Activated T-helper 2 cell treated with anti-CD3 and anti-CD28 coated beads, Interferon-gamma antibody, Interleukin-2, Interleukin-4, amounts not matched to agents 10 μg/mL and 5 μg/mL and 100 μg/mL, durations not matched to agents 14 hours and 24 hours and 36 hours (primary cell): ENCODE measurements at regions of chr20 and their contacts with region 1.

Region 1: DNA sequence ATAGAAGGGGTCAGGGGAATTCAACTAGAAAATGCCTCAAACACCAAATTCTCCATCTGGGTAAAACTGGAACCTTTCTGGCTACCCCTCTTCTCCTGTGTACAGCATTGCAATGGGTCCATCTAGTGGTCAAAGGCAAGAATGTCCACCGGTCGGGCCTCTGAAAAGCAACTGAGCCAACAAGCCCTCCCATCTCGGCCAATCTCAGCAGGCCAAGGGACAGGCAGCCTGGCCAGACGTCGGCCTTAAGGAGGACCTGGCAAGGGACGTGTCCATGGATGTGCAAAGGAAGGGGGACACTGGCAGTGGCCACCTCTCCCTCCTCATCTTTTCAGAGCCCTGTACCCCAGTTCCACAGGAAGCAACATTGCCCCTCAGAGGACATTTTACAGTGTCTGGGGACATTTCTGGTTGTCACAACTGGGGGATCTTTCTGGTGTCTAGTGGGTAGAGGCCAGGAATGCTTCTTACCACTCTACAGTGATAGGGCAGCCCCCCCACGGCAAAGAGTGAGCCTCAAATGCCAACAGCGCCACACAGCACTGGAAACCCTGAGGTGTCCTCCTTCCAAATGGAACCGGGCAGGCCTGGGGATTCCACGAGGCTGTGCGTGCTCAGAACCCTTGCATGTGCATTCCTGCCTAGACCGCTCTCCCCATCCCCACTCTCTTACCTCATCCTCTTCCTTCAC is 99.8 kb upstream of the FOXA2 start:
- DNase-seq: no peak
- H3K4me3 Mint-ChIP-seq: no peak overlapping the region
- H3K27ac Mint-ChIP-seq: no peak overlapping the region
- H3K4me1 Mint-ChIP-seq: no peaks in the 10 kb centered on the region
- H3K27me3 Mint-ChIP-seq: no peaks in the 10 kb centered on the region

Region 2: GRCh38 chr20:22333885-22334545 is 350.2 kb before region 1 on chr20:
- intact Hi-C with region 1: loop called (anchors 1 kb)
- DNase-seq: peak; percentile 14
- H3K4me3 Mint-ChIP-seq: no peak overlapping the region
- H3K27ac Mint-ChIP-seq: no peak overlapping the region
- H3K4me1 Mint-ChIP-seq: no peaks in the 10 kb centered on the region
- H3K27me3 Mint-ChIP-seq: no peaks in the 10 kb centered on the region

Region 3: GRCh38 chr20:22339091-22339881 is 344.9 kb before region 1 on chr20:
- intact Hi-C with region 1: loop called (anchors 1 kb)
- DNase-seq: no peak
- H3K4me3 Mint-ChIP-seq: no peak overlapping the region
- H3K27ac Mint-ChIP-seq: no peak overlapping the region
- H3K4me1 Mint-ChIP-seq: peaks cover 2% of the 10 kb centered on the region
- H3K27me3 Mint-ChIP-seq: peaks cover 1% of the 10 kb centered on the region

Region 4: GRCh38 chr20:22716821-22717351 is 32.7 kb after region 1 on chr20:
- intact Hi-C with region 1: no loop called
- DNase-seq: no peak
- H3K4me3 Mint-ChIP-seq: no peak overlapping the region
- H3K27ac Mint-ChIP-seq: no peak overlapping the region
- H3K4me1 Mint-ChIP-seq: no peaks in the 10 kb centered on the region
- H3K27me3 Mint-ChIP-seq: no peaks in the 10 kb centered on the region

Region 5: GRCh38 chr20:22949331-22950109 is 265.3 kb after region 1 on chr20:
- intact Hi-C with region 1: no loop called
- DNase-seq: no peak
- H3K4me3 Mint-ChIP-seq: no peak overlapping the region
- H3K27ac Mint-ChIP-seq: no peak overlapping the region
- H3K4me1 Mint-ChIP-seq: no peaks in the 10 kb centered on the region
- H3K27me3 Mint-ChIP-seq: no peaks in the 10 kb centered on the region